ENCODE measurements at regions of chr2 and their contacts with region 1.

Region 1: GRCh38 chr2:109510136-109511028 is 103.4 kb downstream of the SEPTIN10 start:
- DNase-seq: peak; percentile 21 to 88
- H3K4me3 ChIP-seq: no peak overlapping the region
- H3K27ac ChIP-seq: no peak overlapping the region
- H3K4me1 ChIP-seq: no peaks in the 10 kb centered on the region
- H3K27me3 ChIP-seq: no peaks in the 10 kb centered on the region
- CTCF ChIP-seq: peak; percentile 94 to 96 (median 96)
- EP300 ChIP-seq: no peak
- POLR2A ChIP-seq: no peak
- RAD21 ChIP-seq: peak; percentile 93 to 94

Region 2: GRCh38 chr2:109128048-109128465 is 382.3 kb before region 1 on chr2:
- CTCF ChIA-PET with region 1: interaction called, 45 read pairs
- POLR2A ChIA-PET with region 1: no interaction called
- DNase-seq: peak; percentile 68 to 90
- H3K4me3 ChIP-seq: peak overlapping the region; percentile 20 to 64 (median 50)
- H3K27ac ChIP-seq: no peak overlapping the region
- H3K4me1 ChIP-seq: peaks cover 0 to 22% (median 5%) of the 10 kb centered on the region in 4 experiments; a peak in 6 of 7 replicates
- H3K27me3 ChIP-seq: peaks cover 20 to 50% (median 34%) of the 10 kb centered on the region in 4 experiments
- CTCF ChIP-seq: peak; percentile 81 to 90 (median 87)
- EP300 ChIP-seq: no peak
- POLR2A ChIP-seq: no peak
- RAD21 ChIP-seq: peak; percentile 94 to 96

Region 3: DNA sequence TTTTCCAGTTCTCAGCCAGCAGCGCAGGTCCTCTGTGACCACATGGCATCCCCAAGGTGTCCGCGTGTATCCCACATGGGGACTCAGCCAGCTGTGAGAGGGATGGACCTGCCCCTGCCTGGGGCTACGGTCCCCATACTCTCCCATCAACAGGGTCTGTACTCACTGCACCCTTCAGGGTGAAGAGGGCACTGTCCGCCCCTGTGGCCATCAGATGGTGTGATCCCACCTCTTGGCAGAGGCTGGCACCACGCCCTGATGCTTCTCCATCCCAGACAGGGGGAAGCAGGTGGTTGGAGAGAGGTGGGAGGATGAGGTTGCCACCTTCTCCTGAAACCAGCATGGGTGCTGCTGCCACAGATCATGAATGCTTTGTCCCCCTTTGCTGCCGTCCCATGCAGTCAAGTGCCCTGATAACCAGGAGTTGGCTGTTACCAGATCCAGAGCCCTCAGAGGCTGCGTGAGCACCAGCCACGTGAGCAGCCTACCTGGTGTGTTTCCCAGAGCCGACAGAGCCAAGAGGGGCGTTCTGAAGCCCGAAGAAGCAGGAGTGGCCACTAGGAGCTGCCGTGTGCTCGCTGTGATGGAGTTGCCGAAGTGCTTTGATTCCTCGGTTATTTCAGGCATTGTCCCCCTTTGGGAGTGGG is 287.4 kb before region 1 on chr2:
- CTCF ChIA-PET with region 1: interaction called, 10 read pairs
- POLR2A ChIA-PET with region 1: no interaction called
- DNase-seq: no peak
- H3K4me3 ChIP-seq: no peak overlapping the region
- H3K27ac ChIP-seq: no peak overlapping the region
- H3K4me1 ChIP-seq: no peaks in the 10 kb centered on the region; a peak in 1 of 7 replicates
- H3K27me3 ChIP-seq: no peaks in the 10 kb centered on the region
- CTCF ChIP-seq: peak; percentile 42 to 73 (median 66)
- EP300 ChIP-seq: no peak
- POLR2A ChIP-seq: no peak
- RAD21 ChIP-seq: peak; percentile 60 to 66

Region 4: DNA sequence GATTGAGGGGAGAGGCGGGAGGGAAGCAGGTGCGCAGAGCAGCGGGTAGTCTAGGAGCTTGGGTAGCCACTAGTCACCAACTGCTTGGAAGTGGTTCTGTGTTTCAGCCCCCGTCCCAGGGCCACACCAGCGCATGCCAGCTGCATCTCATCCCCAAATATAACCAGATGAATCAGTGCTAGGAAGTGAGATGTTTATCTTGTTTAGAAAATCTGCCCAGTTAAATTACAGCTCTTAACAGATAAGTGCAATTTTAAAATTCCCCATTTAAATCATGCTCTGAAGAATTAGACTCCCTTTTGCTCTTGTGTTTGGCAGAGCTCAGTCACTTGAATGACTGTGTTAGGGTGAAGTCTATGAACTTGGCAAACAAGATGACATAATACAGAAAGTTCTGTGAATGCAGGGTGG is 90.4 kb before region 1 on chr2:
- CTCF ChIA-PET with region 1: interaction called, 16 read pairs
- POLR2A ChIA-PET with region 1: no interaction called
- DNase-seq: no peak
- H3K4me3 ChIP-seq: no peak overlapping the region
- H3K27ac ChIP-seq: no peak overlapping the region
- H3K4me1 ChIP-seq: peaks cover 0 to 7% (median 2%) of the 10 kb centered on the region in 4 experiments; a peak in 4 of 7 replicates
- H3K27me3 ChIP-seq: no peaks in the 10 kb centered on the region
- CTCF ChIP-seq: no peak
- EP300 ChIP-seq: no peak
- POLR2A ChIP-seq: no peak
- RAD21 ChIP-seq: no peak

Region 5: DNA sequence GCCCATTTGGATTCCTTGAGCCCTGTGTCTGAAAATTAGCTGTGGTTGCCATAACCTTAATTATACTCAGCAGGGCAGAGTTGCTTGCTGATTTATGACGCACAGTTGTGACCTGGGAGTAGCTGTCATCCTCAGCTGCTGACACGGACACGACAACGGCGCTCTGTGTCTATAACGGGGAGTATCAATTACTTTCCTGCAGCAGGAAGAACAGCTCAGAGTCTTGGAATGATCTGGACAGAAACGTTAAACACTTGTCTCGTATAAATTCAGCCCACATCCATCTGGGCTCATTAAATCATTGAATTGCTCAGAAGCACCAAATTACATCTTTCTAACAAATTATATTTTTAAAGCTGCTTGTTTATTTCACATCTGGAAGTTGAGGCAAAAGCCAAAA is 12.9 kb before region 1 on chr2:
- CTCF ChIA-PET with region 1: interaction called, 22 read pairs
- POLR2A ChIA-PET with region 1: no interaction called
- DNase-seq: no peak
- H3K4me3 ChIP-seq: no peak overlapping the region
- H3K27ac ChIP-seq: no peak overlapping the region
- H3K4me1 ChIP-seq: no peaks in the 10 kb centered on the region
- H3K27me3 ChIP-seq: no peaks in the 10 kb centered on the region
- CTCF ChIP-seq: no peak
- EP300 ChIP-seq: no peak
- POLR2A ChIP-seq: no peak
- RAD21 ChIP-seq: no peak